CD8-positive, alpha-beta T cell (primary cell): ENCODE measurements at regions of chr20 and their contacts with region 1.

Region 1: DNA sequence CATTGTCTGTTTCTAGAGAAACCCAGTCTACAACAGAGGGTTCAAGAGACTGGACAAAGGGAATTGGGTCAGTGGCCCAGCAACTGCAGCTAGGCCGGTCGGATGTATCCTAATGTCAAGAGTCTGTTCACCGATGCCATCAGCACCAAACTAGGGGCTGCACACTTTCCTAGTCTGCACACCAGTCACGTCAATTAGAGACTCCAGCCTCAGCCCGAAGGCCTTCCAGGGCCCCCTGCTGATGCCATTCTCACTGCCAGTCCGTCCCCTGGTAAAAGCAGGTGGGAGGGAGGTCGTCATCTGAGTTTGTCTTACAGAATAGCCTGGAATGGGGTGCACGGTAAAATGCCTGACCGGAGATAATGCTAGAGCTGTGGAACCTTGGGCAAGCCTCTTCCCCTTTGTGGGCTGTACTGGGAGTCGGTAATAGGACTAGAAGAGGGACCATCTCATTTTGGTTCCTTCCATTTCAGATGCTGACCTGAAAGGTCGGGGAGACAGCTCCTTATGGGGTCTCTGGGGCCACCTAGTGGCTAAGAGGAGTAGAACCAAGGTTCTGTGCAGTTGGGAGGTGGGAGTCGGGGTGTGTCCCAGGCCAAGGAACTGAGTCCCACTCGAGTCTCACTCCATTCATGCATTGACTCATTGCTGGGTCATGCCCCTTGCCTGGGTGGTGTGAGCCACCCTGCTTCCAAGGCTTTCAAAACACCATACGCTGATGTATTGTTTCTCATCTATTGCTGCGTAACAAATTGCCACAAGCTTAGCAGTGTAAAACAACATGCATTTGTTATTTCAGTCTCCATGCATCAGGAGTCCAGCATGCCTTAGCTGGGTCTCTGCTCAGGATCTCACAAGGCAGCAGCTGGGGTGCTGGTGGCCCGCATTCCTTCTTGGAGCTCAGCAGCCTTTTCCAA is 5.1 kb downstream of the SOX12 start:
- DNase-seq: peak in 7 of 9 experiments; percentile 38 to 82 (median 72)
- ATAC-seq: peak; percentile 37
- H3K4me3 ChIP-seq: no peak overlapping the region
- H3K4me3 Mint-ChIP-seq: no peak overlapping the region
- H3K27ac ChIP-seq: no peak overlapping the region
- H3K27ac Mint-ChIP-seq: no peak overlapping the region
- H3K4me1 ChIP-seq: peaks cover 20% of the 10 kb centered on the region
- H3K4me1 Mint-ChIP-seq: peaks cover 32% of the 10 kb centered on the region
- H3K27me3 ChIP-seq: no peaks in the 10 kb centered on the region
- H3K27me3 Mint-ChIP-seq: no peaks in the 10 kb centered on the region
- CTCF ChIP-seq: peak; percentile 86

Region 2: DNA sequence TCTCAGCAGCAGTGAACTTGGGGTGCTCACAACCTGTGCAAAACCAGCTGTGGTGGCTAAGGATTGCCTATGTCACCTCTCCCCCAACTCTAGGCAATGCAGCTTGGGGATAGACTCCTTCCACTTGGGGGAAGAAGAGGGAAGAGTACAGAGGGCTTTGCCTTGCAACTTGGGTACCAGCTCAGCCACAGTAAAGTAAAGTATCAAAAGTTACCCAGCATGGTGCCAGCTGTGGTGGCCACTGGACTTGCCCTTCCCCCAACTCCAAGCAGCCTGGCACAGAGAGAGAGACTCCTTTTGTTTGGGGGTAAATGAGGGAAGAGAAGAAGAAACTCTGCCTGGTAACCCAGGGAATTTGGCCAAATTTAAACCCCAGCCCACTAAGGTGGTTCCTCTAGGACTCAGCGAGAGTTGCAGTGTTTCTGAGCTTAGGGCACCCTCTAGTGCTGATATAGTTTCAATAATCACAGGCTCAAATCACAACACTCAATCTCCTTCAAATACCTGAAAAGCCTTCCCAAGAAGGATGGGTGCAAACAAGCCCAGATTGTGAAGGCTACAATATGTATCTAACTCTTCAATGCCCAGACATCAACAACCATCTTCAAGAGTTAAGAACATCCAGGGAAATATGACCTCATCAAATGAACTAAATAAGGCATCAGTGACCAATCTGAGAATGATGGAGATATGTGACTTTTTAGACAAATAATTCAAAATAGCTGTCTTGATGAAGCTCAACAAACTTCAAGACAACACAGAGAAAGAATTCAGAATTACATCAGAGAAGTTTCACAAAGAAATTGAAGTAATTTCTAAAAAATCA is 111.0 kb before region 1 on chr20:
- CTCF ChIA-PET with region 1: interaction called, 14 read pairs
- POLR2A ChIA-PET with region 1: no interaction called
- intact Hi-C with region 1: no loop called
- DNase-seq: peak in 2 of 9 experiments; percentile 7 to 20
- ATAC-seq: no peak
- H3K4me3 ChIP-seq: no peak overlapping the region
- H3K4me3 Mint-ChIP-seq: no peak overlapping the region
- H3K27ac ChIP-seq: no peak overlapping the region
- H3K27ac Mint-ChIP-seq: no peak overlapping the region
- H3K4me1 ChIP-seq: no peaks in the 10 kb centered on the region
- H3K4me1 Mint-ChIP-seq: no peaks in the 10 kb centered on the region
- H3K27me3 ChIP-seq: peaks cover 0 to 5% of the 10 kb centered on the region in 2 experiments
- H3K27me3 Mint-ChIP-seq: peaks cover 16% of the 10 kb centered on the region
- CTCF ChIP-seq: no peak

Region 3: GRCh38 chr20:266596-267562 is 63.6 kb before region 1 on chr20:
- CTCF ChIA-PET with region 1: interaction called, 51 read pairs
- POLR2A ChIA-PET with region 1: interaction called, 3 read pairs
- intact Hi-C with region 1: loop called (anchors 1 kb)
- DNase-seq: peak; percentile 78 to 95 (median 89)
- ATAC-seq: peak; percentile 100
- H3K4me3 ChIP-seq: peak overlapping the region; percentile 51 to 69
- H3K4me3 Mint-ChIP-seq: peak overlapping the region; percentile 86
- H3K27ac ChIP-seq: no peak overlapping the region
- H3K27ac Mint-ChIP-seq: no peak overlapping the region
- H3K4me1 ChIP-seq: no peaks in the 10 kb centered on the region
- H3K4me1 Mint-ChIP-seq: peaks cover 9% of the 10 kb centered on the region
- H3K27me3 ChIP-seq: no peaks in the 10 kb centered on the region
- H3K27me3 Mint-ChIP-seq: peaks cover 2% of the 10 kb centered on the region
- CTCF ChIP-seq: peak; percentile 92

Region 4: DNA sequence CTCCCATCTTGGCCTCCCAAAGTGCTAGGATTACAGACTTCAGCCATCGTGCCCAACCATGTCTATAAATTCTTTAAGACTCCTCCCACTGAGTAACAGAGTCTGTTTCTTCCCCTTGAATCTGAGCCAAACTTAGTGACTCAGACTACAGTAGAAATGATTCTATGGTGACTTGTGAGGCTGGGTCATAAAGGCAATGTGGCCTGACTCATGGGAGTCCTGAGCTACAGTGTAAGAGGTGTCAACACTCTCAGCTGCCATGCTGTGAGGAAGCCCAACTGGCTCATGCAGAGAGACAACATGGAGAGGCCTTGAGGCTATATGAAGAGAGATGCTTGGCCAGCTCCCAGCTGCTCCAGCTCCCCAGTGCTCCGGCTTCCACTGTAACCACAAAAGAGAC is 11.2 kb after region 1 on chr20:
- CTCF ChIA-PET with region 1: interaction called, 31 read pairs
- POLR2A ChIA-PET with region 1: interaction called, 3 read pairs
- intact Hi-C with region 1: no loop called
- DNase-seq: no peak
- ATAC-seq: no peak
- H3K4me3 ChIP-seq: no peak overlapping the region
- H3K4me3 Mint-ChIP-seq: no peak overlapping the region
- H3K27ac ChIP-seq: no peak overlapping the region
- H3K27ac Mint-ChIP-seq: no peak overlapping the region
- H3K4me1 ChIP-seq: no peaks in the 10 kb centered on the region
- H3K4me1 Mint-ChIP-seq: peaks cover 7% of the 10 kb centered on the region
- H3K27me3 ChIP-seq: no peaks in the 10 kb centered on the region
- H3K27me3 Mint-ChIP-seq: no peaks in the 10 kb centered on the region
- CTCF ChIP-seq: no peak